Activated CD4-positive, alpha-beta T cell treated with anti-CD3 and anti-CD28 coated beads for 36 hours (primary cell): ENCODE measurements at regions of chr17 and their contacts with region 1.

Region 1: GRCh38 chr17:62653002-62653825 is 25.7 kb downstream of the MRC2 start:
- DNase-seq: peak; percentile 97
- ATAC-seq: peak; percentile 95
- H3K4me3 Mint-ChIP-seq: peak overlapping the region; percentile 65
- H3K27ac Mint-ChIP-seq: peak overlapping the region; percentile 65
- H3K4me1 Mint-ChIP-seq: peaks cover 23% of the 10 kb centered on the region
- H3K27me3 Mint-ChIP-seq: peaks cover 19% of the 10 kb centered on the region

Region 2: GRCh38 chr17:62478433-62478879 is 174.8 kb before region 1 on chr17 and contains the start of gene TLK2:
- CTCF ChIA-PET with region 1: no interaction called
- POLR2A ChIA-PET with region 1: no interaction called
- intact Hi-C with region 1: loop called in 1 of 2 experiments (anchors 1 kb)
- DNase-seq: peak; percentile 88
- ATAC-seq: peak; percentile 83
- H3K4me3 Mint-ChIP-seq: peak within 1 kb of the TSS; percentile 93
- H3K27ac Mint-ChIP-seq: peak within 1 kb of the TSS; percentile 96
- H3K4me1 Mint-ChIP-seq: peaks cover 28% of the 10 kb centered on the region
- H3K27me3 Mint-ChIP-seq: no peaks in the 10 kb centered on the region
- total RNA-seq, gene TLK2: 37.4 to 60.2 TPM

Region 3: GRCh38 chr17:62562656-62563055 is 90.6 kb before region 1 on chr17:
- CTCF ChIA-PET with region 1: no interaction called
- POLR2A ChIA-PET with region 1: interaction called, 3 read pairs
- intact Hi-C with region 1: loop called (anchors 1 to 10 kb)
- DNase-seq: no peak
- ATAC-seq: no peak
- H3K4me3 Mint-ChIP-seq: no peak overlapping the region
- H3K27ac Mint-ChIP-seq: no peak overlapping the region
- H3K4me1 Mint-ChIP-seq: peaks cover 29% of the 10 kb centered on the region
- H3K27me3 Mint-ChIP-seq: no peaks in the 10 kb centered on the region

Region 4: DNA sequence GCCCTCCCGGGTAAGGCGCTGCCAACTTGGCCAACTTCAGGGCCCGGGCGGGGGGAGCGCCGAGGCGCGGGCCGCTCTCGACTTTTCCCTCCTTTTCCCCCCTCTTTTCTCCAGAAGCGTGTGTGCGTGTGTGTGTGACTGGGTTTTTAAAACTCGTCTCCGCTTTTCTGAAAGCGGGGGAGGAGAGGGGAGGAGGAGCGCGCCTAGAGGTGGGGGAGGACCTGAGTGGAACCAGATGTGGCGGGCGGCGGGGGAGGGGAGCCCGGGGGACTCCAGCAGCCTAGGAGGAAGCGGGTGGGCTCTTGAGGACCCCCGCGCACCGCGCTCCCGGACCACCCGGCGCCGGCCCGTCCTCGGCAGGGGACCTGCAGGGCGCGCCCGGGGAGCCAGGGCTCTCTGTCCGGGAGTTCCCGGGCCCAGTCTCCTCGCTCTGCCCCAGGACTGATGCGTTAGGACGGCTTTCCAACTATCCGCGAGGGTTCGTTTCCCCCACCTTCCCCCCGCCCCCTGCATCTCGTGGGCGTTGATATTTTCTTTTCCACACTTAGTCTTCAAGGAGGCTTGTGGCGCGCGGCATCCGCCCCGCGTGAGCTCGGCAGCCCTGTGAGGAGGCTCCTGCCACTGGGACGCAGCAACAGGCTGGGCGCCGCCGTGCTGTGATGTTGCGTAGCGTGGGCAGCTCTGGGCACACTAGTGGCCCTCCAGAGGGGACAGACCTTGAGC is 25.1 kb before region 1 on chr17:
- CTCF ChIA-PET with region 1: no interaction called
- POLR2A ChIA-PET with region 1: interaction called, 3 read pairs
- intact Hi-C with region 1: loop called (anchors 1 to 2 kb)
- DNase-seq: peak; percentile 68
- ATAC-seq: peak; percentile 53
- H3K4me3 Mint-ChIP-seq: peak overlapping the region; percentile 80
- H3K27ac Mint-ChIP-seq: peak overlapping the region; percentile 87
- H3K4me1 Mint-ChIP-seq: peaks cover 26% of the 10 kb centered on the region
- H3K27me3 Mint-ChIP-seq: peaks cover 18% of the 10 kb centered on the region

Region 5: GRCh38 chr17:62724398-62725146 is 71.4 kb after region 1 on chr17:
- CTCF ChIA-PET with region 1: interaction called, 5 read pairs
- POLR2A ChIA-PET with region 1: interaction called, 4 read pairs
- intact Hi-C with region 1: loop called (anchors 1 kb)
- DNase-seq: peak; percentile 92
- ATAC-seq: peak; percentile 98
- H3K4me3 Mint-ChIP-seq: peak overlapping the region; percentile 11
- H3K27ac Mint-ChIP-seq: no peak overlapping the region
- H3K4me1 Mint-ChIP-seq: peaks cover 26% of the 10 kb centered on the region
- H3K27me3 Mint-ChIP-seq: peaks cover 51% of the 10 kb centered on the region

Region 6: DNA sequence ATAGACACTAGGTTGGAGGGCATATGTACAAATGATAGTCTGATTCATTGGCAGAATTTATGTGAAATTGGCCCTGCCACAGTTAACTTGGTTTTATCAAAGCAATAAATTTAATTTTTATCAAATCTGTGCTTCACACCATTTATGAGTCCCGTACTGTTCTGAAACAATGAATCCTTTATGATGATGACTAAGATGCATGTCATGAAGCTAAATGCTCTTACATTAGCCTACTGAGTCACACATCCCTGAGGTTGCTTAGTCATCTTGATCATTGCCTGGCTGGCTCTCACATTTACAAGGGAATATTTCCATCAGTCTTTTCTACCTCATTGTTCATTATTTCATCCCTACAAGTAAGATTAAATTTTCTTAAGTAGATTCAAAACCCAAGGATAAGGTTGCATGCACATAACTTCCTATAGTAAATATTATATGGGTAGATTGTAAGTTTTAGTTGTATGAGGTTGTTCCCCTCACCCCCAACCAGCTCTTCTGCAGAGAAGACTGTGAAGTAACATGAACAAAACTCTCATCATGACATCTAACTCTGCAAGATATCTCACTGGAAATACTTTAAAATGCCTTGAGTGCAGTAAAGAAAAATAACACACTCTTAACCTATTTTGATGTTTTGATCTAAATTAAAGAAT is 622.2 kb after region 1 on chr17:
- CTCF ChIA-PET with region 1: no interaction called
- POLR2A ChIA-PET with region 1: no interaction called
- intact Hi-C with region 1: loop called in 1 of 2 experiments (anchors 5 kb)
- DNase-seq: peak; percentile 51
- ATAC-seq: peak; percentile 97
- H3K4me3 Mint-ChIP-seq: no peak overlapping the region
- H3K27ac Mint-ChIP-seq: no peak overlapping the region
- H3K4me1 Mint-ChIP-seq: peaks cover 31% of the 10 kb centered on the region
- H3K27me3 Mint-ChIP-seq: no peaks in the 10 kb centered on the region